ENCODE measurements at regions of chr18 and their contacts with region 1.

Region 1: DNA sequence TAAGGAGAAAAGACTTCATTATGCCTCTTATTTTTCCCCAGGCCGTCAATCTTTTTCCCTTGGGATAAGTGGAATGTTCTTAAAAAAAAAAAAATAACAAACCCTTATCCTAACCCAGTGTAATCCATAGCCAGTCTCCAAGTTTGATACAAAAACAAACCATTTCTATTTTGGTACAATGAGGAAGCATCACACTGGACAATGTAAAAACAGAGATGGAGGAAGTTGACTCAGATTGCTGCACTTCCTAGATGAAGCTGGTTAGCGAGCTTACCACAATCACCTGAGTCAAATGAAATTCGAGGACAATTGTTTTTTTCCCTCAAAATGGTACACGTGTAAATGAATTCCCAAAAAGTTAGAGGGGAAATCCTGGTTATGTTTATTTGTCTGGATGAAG is 259.7 kb downstream of the TCF4 start:
- DNase-seq: peak; percentile 96
- H3K4me3 ChIP-seq: peak overlapping the region in 1 of 3 experiments; percentile 19
- H3K27ac ChIP-seq: peak overlapping the region; percentile 92
- H3K4me1 ChIP-seq: peaks cover 69% of the 10 kb centered on the region
- H3K27me3 ChIP-seq: no peaks in the 10 kb centered on the region
- CTCF ChIP-seq: no peak
- POLR2A ChIP-seq: peak; percentile 36

Region 2: GRCh38 chr18:55038162-55038561 is 290.1 kb before region 1 on chr18:
- CTCF ChIA-PET with region 1: no interaction called
- POLR2A ChIA-PET with region 1: no interaction called
- dilution Hi-C with region 1: no loop called
- intact Hi-C with region 1: no loop called
- DNase-seq: no peak
- H3K4me3 ChIP-seq: no peak overlapping the region
- H3K27ac ChIP-seq: no peak overlapping the region
- H3K4me1 ChIP-seq: no peaks in the 10 kb centered on the region
- H3K27me3 ChIP-seq: peaks cover 7 to 26% of the 10 kb centered on the region in 2 experiments
- CTCF ChIP-seq: no peak
- POLR2A ChIP-seq: no peak

Region 3: GRCh38 chr18:55110436-55110835 is 217.9 kb before region 1 on chr18:
- CTCF ChIA-PET with region 1: no interaction called
- POLR2A ChIA-PET with region 1: no interaction called
- dilution Hi-C with region 1: no loop called
- intact Hi-C with region 1: loop called (anchors 1 kb)
- DNase-seq: peak; percentile 73
- H3K4me3 ChIP-seq: no peak overlapping the region
- H3K27ac ChIP-seq: peak overlapping the region; percentile 90
- H3K4me1 ChIP-seq: peaks cover 23% of the 10 kb centered on the region
- H3K27me3 ChIP-seq: no peaks in the 10 kb centered on the region
- CTCF ChIP-seq: no peak
- POLR2A ChIP-seq: peak; percentile 35

Region 4: DNA sequence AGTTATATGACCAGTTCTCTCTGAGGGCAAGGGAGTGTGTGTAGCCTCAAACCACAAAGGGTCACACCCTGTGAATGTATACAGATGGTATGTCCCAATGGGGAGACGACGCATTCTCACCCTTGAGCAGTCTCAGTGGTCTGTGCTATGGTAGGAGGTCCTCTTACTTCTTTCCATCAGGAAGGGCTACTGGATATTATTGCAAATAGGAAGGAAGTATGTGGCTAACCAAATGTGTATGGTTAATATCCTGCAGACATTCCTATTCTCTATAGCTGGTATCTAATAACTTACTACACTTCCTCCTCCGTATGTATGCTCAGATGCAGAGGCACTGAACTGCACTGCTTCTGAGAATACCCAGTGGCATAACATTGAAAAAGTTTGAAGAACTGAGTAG is 62.3 kb before region 1 on chr18:
- CTCF ChIA-PET with region 1: interaction called, 4 read pairs
- POLR2A ChIA-PET with region 1: no interaction called
- dilution Hi-C with region 1: no loop called
- intact Hi-C with region 1: loop called (anchors 2 kb)
- DNase-seq: peak; percentile 75
- H3K4me3 ChIP-seq: no peak overlapping the region
- H3K27ac ChIP-seq: peak overlapping the region; percentile 73
- H3K4me1 ChIP-seq: peaks cover 67% of the 10 kb centered on the region
- H3K27me3 ChIP-seq: no peaks in the 10 kb centered on the region
- CTCF ChIP-seq: no peak
- POLR2A ChIP-seq: peak; percentile 30

Region 5: DNA sequence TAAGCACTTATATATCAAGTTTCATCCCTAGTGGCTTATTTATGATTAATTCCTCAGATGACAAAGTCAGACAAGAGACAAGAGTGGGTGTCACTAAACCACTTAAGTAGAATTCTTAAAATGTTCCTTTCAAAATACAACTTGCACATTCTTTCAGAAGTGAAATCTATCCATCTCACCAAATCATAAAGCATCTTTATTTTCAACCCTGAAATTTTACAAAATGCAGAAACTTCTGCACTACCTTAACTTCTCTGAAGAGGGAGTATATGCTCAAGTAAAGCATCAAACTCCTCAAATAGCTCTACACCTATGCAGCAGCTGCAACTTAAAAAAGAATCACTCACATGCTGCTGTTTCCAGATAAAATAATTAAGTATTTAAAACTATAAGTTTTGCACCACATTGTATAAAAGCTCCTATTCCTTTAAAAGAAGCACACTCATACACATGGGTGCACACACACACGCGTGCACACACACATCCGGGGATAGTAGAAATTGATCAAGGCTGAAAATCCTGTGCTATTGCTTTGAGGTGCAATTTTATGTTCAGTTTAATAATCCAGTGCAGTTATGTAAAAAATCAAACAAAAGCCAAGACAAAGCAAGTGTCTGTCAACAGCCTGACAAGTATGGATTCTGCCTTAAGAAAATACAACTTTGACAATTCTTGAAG is 15.2 kb after region 1 on chr18:
- CTCF ChIA-PET with region 1: interaction called, 12 read pairs
- POLR2A ChIA-PET with region 1: interaction called, 3 read pairs
- dilution Hi-C with region 1: no loop called
- intact Hi-C with region 1: loop called (anchors 1 kb)
- DNase-seq: peak; percentile 46
- H3K4me3 ChIP-seq: no peak overlapping the region
- H3K27ac ChIP-seq: no peak overlapping the region
- H3K4me1 ChIP-seq: peaks cover 26% of the 10 kb centered on the region
- H3K27me3 ChIP-seq: no peaks in the 10 kb centered on the region
- CTCF ChIP-seq: peak; percentile 9 to 24
- POLR2A ChIP-seq: no peak

Region 6: DNA sequence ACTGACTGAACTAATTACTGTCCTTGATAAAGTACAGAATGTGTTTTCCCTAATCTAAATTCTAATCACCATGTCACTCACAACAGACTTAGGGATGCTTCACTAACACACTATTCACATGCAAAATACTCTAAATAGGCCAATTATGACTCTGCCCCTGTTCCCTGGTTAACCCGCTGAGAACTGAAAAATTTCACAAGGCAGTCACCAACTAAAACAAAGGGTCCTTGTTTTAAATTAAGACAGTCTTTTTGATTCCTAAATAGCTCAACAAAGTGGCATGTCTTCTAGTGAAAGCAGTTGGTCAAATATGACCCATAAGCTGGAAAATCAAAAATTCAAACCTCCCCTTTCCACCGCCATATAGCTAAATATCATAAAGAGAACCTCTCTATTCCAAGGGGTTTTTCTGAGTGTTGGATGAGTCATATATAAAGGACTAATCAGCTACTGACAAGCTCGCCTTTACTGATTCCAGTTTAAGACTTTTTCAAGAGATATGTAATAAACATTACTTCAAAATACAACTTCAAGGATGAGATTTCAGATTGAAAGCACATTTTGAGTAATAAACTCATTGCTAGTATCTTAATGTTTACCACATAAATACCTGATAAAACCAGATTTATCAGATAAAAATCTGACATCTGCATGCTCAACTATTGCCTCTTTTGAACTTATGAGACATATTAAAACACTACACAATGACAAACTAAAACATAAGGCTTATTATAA is 23.8 kb after region 1 on chr18:
- CTCF ChIA-PET with region 1: no interaction called
- POLR2A ChIA-PET with region 1: interaction called, 14 read pairs
- dilution Hi-C with region 1: no loop called
- intact Hi-C with region 1: no loop called
- DNase-seq: no peak
- H3K4me3 ChIP-seq: no peak overlapping the region
- H3K27ac ChIP-seq: no peak overlapping the region
- H3K4me1 ChIP-seq: peaks cover 34% of the 10 kb centered on the region
- H3K27me3 ChIP-seq: no peaks in the 10 kb centered on the region
- CTCF ChIP-seq: no peak
- POLR2A ChIP-seq: no peak

Region 7: DNA sequence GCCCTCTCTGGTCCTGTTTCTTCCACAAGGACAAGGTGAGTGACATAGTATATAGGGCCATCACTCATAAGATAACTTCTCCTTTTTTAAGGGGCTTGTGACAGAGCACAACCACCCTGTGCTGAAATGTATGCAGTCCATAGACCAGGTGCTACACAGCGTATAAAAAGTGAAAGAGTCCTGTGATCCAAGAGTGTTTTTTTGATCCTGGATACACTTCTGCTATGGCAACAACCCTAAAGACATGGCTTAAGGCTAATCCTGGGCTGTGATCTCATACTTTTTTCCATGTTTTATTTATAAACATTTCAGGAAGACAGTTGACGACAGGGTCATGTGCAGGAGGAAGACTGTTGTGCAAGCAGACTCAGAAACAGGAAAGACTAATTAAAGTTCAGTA is 660.2 kb after region 1 on chr18:
- CTCF ChIA-PET with region 1: no interaction called
- POLR2A ChIA-PET with region 1: interaction called, 10 read pairs
- dilution Hi-C with region 1: no loop called
- intact Hi-C with region 1: loop called (anchors 10 kb)
- DNase-seq: peak; percentile 94
- H3K4me3 ChIP-seq: no peak overlapping the region
- H3K27ac ChIP-seq: peak overlapping the region; percentile 81
- H3K4me1 ChIP-seq: peaks cover 10% of the 10 kb centered on the region
- H3K27me3 ChIP-seq: no peaks in the 10 kb centered on the region
- CTCF ChIP-seq: no peak
- POLR2A ChIP-seq: no peak

Region 8: GRCh38 chr18:56021136-56021808 is 693.0 kb after region 1 on chr18:
- CTCF ChIA-PET with region 1: no interaction called
- POLR2A ChIA-PET with region 1: no interaction called
- dilution Hi-C with region 1: no loop called
- intact Hi-C with region 1: loop called (anchors 2 kb)
- DNase-seq: peak; percentile 86
- H3K4me3 ChIP-seq: peak overlapping the region in 1 of 3 experiments; percentile 3
- H3K27ac ChIP-seq: peak overlapping the region; percentile 93
- H3K4me1 ChIP-seq: peaks cover 35% of the 10 kb centered on the region
- H3K27me3 ChIP-seq: no peaks in the 10 kb centered on the region
- CTCF ChIP-seq: no peak
- POLR2A ChIP-seq: no peak